Left cardiac atrium (tissue), 4 donors: ENCODE measurements at regions of chr16 and their contacts with region 1.

Region 1: GRCh38 chr16:53232826-53233529 is 178.2 kb downstream of the CHD9 start:
- DNase-seq: no peak
- ATAC-seq: no peak

Region 2: DNA sequence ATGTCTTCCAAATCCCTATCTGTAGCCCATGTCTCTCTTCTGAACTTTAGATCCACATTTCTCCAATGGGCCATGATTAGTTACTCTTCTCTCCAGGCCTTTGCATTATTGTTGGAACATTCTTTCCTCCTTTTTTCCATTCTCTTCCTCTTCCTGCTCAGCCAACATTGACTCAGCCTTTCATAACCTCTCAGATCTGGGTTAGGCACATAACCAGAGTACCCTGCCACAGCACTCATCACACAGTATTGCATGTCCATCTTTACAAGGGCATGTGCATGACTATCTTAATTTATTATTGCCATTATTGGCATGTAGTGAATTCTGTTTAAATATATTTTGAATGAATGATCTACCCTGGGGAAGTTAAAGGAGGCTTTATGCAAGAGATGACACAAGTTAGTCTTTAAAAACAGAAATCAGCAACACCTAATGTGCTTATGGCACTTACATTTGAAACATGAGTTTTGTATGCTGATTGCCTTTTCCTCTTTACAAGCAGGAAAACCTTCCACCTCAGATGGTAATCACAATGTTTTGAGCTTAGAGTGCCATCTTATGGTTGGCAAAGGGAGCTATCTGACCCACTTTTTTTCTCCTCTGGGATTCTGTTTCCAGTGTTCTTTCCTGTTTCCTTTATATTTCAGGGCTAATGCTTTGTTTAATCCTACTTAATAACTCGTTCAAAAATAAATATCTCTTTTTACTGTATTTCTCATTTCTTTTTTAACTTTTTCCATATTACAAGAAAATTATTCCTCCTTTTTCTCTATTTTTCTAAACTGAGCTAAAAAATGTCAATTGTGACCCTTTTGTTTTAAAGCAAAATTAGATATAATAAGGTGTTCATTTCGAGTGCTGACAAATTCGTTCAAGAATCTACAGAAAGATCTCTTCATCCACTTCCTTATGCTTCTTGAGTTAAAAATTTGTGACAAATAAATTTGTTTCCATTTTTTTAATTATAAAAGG is 50.3 kb after region 1 on chr16:
- intact Hi-C with region 1: loop called in 1 of 2 experiments (anchors 10 kb)
- DNase-seq: no peak
- ATAC-seq: peak in 1 of 2 donors; percentile 25